ENCODE measurements at regions of chr9 and their contacts with region 1.

Region 1: DNA sequence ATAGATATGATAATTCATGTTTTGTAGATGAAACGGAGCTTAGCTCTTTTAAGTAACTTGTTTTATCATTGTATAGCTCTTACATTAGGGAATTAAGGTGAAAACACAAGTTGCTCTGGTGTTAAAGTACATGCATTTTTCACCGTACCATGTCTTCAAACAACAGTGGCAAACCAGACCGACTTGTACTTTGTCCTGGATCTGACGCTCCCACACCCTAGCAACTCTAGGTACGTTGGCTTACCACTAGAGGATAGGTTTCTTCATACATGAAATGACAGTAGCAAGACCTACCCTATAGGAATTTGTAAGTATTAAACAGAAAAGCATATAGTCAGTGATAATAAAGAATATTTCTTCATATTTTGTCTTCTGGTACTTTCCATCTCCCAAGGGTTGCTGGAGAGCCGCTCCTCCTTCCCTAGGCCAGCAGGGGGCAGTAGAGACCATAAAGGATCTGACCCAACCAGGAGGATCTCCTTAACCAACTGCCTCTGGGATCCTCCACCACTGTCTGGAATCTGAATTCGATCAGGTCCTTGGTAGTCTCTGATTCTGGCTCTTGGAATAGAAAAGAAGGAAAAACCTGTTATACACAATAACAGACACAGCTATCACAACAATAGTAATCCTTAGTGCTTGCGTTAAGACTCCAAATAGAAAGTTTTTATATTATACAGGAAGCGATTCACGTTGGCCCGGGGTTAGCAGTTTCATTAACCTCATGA is 136.7 kb downstream of the CAVIN4 start:
- DNase-seq: peak; percentile 60 to 97 (median 88)

Region 2: GRCh38 chr9:100605405-100605804 is 109.1 kb before region 1 on chr9:
- intact Hi-C with region 1: no loop called
- DNase-seq: no peak

Region 3: DNA sequence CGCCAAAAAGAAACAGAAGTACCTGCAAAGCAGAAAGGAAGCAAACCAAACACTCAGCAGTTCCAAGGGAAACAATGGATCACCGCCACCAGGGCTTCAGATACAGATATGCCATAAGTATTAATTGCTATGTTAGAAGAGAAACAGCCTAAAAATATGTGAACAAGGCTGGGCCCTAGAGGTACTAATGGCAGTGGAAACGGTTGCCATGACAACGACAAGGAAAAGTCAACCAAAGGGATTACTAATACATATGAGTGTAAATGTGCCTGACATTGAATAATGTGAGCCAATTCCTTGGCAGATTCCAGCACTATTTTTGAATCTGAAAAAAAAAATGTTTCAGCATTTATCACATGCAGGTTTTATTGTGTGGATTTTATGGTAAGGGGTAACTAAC is 61.7 kb before region 1 on chr9:
- intact Hi-C with region 1: no loop called
- DNase-seq: no peak

Region 4: GRCh38 chr9:101119206-101119819 is 404.8 kb after region 1 on chr9:
- intact Hi-C with region 1: loop called (anchors 5 kb)
- DNase-seq: peak; percentile 36 to 96 (median 74)

Region 5: GRCh38 chr9:101235105-101235866 is 520.8 kb after region 1 on chr9:
- intact Hi-C with region 1: loop called (anchors 2 kb)
- DNase-seq: no peak

Region 6: DNA sequence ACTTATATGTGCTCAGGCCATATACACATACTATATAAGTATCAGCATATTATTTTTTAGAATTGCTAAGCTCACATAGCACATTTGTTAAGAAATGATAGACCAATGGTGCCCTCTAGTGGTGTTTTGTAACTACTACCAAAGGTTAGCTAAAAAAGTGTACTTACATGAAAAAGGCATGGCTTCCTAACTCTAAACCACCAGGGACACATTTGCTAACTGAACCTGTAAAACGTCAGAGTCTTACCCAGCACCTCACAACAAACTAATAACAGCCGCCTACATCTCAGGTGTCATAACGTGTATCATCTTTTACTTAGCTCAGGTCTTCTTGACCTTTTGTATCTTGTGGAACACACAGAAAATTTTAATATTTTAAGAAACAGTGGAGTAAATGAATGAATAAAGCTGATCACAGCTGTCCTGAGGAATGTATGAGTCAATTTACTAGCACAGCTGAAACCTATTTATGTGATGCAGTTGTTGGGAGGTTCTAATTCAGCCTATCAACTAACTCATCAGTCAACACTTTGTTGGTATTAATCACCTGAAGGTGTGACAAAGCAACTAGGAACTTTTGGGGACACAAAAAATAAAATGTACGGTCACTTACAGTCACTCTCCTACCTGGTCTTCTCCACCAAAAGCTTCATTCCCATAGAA is 597.4 kb after region 1 on chr9:
- intact Hi-C with region 1: loop called (anchors 1 kb)
- DNase-seq: no peak

Region 7: GRCh38 chr9:101387871-101388506 is 673.5 kb after region 1 on chr9:
- intact Hi-C with region 1: loop called (anchors 5 kb)
- DNase-seq: no peak